Dorsolateral prefrontal cortex (tissue), 120 donors: ENCODE measurements at regions of chr11 and their contacts with region 1.

Region 1: DNA sequence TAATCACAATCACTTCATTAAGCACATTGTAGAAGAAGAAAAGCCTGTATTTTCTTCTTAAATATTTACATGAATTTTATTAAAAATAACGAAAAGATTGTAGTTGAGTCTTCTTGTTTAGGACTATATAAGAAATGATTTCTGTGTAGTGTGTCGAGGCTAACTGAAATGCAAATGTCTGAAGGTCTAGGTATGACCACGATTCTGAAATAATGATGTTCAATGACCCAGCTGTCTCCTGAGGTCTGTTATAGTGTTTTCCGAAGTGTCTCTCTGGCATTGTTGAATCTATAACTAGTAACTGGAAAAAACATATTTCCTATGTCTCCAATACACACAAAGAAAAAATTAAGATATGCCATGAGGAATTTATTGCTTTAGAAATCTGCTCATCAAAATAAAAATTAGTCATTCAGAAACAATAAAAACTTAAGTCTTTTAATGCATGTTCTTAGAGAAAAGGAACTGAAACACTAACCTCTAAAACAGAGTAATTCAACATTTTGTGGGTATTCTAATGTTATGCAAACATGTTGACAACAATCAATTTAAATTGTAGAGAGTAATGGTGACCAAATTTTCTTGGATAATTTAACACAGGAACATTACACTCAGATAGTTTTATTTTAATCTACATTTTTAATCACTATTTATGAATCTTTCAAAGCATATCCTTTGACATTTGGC is 55.0 kb downstream of the CASP12 start:
- DNase-seq: no peak
- H3K4me3 ChIP-seq: no peak overlapping the region
- H3K27ac ChIP-seq: peak overlapping the region in 3 of 59 donors; percentile 1 to 36 (median 12)
- H3K27me3 ChIP-seq: no peaks in the 10 kb centered on the region
- CTCF ChIP-seq: no peak

Region 2: GRCh38 chr11:104609311-104610085 is 233.8 kb before region 1 on chr11:
- intact Hi-C with region 1: loop called in 1 of 2 experiments (anchors 10 kb)
- DNase-seq: peak in 3 of 10 donors; percentile 18 to 37 (median 29)
- H3K4me3 ChIP-seq: peak overlapping the region in 13 of 59 donors; percentile 0 to 37 (median 19)
- H3K27ac ChIP-seq: peak overlapping the region in 48 of 59 donors; percentile 0 to 80 (median 50)
- H3K27me3 ChIP-seq: no peaks in the 10 kb centered on the region
- CTCF ChIP-seq: peak in 55 of 56 donors; percentile 52 to 91 (median 76)

Region 3: GRCh38 chr11:105392556-105392955 is 549.3 kb after region 1 on chr11:
- intact Hi-C with region 1: no loop called
- DNase-seq: no peak
- H3K4me3 ChIP-seq: no peak overlapping the region
- H3K27ac ChIP-seq: no peak overlapping the region
- H3K27me3 ChIP-seq: no peaks in the 10 kb centered on the region
- CTCF ChIP-seq: no peak